ENCODE measurements at regions of chr6 and their contacts with region 1.

Region 1: DNA sequence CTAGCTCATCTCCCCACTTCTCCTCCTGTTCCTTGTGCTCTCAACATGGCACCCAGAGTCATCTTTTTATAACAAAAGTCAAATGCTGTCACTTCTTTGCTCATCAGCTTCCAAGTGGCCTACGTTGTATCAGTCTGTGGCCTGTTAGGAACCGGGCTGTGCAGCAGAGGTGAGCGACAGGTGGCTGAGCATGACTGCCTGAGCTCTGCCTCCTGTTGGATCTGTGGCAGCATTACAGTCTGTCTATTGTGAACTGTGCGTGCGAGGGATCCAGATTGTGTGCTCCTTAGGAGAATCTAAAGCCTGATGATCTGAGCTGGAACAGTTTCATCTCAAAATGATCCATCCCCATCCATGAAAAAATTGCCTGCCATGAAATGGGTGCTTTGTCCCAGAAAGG is 129.6 kb downstream of the FNDC1 start:
- DNase-seq: no peak
- H3K4me3 ChIP-seq: no peak overlapping the region
- CTCF ChIP-seq: no peak

Region 2: DNA sequence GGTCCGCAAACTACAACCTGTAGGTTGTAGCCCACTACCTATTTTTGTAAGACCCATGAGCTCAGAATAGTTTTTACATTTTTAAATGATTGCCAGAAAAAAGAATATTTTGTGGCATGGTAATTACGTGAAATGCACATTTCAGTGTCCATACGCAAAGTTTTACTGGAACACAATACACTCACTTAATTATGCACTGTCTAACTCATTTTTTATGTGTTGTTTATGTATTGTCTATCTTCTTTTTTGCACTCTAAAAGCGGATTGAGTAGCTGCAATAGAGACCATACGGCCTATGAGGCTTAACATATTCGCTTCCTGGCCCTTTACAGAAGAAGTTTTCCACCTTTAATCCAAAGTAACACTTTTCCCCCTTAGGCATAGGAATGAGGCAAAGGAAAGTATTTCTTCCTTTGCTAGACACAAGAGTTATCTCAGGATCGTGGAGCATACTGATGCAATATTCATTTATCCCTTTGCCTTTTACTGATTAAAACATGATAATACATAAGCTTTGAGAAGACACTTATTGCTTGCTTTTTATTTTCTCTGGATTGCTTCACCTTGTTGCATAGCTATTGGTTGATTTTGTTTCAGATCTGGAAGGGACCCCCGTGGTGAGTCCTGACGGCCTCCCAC is 59.8 kb before region 1 on chr6:
- in situ Hi-C with region 1: no loop called
- DNase-seq: no peak
- H3K4me3 ChIP-seq: no peak overlapping the region
- CTCF ChIP-seq: no peak

Region 3: DNA sequence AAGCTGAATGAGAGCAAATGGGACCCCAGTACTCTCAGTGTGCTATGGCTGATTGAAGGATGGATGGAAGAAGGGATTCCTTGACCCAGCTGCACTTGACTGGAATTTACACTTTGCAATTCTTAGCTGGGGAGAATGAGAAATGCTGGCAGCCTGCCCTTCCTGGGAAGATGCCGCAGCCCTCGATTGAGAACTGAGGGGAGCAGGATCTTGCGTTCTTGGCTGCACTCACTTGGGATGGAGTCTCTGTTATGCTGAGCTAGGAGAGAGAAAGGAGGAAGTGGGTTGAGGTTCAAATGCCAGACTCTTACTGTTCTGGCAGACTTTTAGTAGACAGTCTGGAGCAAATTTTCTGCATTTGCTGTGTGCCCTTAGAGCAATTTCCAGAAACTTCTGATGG is 91.5 kb after region 1 on chr6:
- in situ Hi-C with region 1: loop called (anchors 5 kb)
- DNase-seq: peak; percentile 24
- H3K4me3 ChIP-seq: no peak overlapping the region
- CTCF ChIP-seq: no peak